OCI-LY7 (cell line): ENCODE measurements at regions of chr2 and their contacts with region 1.

Region 1: DNA sequence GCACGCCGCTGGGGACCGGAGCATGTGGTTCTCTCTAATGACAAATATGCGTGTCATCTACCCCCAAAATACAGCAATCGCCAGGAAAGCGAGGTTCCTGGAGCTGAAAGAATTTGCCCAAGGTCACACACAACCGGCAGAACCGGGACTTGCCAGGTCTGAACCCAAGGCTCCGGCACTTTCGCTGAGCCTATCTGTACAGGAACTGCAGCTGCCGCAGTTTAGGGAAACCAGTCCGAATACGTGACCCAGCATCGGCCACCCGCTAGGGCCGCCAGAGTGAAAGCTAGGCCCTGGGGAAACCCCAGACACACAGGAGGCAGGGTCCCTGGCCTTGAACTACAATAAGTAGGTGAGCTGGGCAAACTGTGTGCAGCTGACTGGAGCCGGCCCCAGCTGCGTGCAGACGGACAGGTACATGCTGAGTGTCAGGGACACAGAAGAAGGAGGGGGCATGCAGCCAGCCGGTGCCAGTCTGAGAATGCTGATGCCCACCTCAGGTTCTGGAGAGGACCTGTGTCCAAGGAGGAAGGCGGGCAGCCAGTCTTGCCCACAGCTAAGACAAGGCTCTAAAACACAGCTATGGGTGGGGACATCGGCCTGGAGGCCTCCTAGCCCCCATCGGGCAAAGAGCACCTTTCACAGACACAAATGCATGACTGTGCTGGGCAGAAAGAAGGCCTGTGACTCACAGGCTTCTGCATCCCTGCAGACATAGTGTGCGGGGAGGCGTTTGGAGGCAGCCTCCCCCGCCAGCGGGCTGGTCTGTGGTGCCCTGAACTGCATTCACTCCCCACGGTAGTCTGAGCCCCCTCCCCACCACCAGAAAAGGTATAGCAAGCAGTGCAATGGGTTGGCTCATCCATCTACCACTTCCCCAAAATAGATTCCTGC is 107.5 kb upstream of the ID2 start:
- DNase-seq: peak; percentile 96
- H3K4me3 ChIP-seq: peak overlapping the region; percentile 75
- H3K27ac ChIP-seq: peak overlapping the region; percentile 98
- H3K4me1 ChIP-seq: peaks cover 95% of the 10 kb centered on the region
- CTCF ChIP-seq: 0 out of 2 replicates have a peak, but pooled peaks have one; percentile 20

Region 2: DNA sequence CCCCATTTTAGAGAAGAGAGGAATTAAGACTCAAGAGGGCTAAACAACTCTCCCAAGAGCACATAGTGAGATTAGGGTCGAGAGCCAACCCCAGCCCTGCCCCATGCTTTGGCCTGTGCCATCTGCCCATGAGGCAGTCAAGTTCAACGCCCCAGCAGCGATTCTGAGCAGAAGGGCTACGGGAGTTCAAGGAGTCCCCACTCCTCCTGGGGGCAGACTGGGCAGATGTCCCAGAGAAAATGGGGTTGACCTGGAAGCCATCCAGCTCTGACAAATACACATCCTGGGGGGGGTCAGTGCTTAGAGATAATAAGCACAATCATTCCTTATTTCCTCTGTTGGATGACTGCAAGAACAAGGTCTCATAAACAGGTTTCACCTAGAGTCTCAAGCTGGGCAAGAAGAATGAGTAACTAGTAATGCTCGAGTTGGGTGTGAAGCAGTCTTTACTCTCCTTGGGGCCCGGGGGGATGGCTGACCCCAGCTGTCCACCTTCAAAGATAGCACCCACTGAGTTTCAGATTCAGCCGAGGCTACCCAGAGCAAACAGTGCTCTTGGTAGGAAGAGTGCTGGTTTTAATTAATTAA is 940.7 kb before region 1 on chr2:
- CTCF ChIA-PET with region 1: no interaction called
- POLR2A ChIA-PET with region 1: no interaction called
- intact Hi-C with region 1: loop called (anchors 10 kb)
- DNase-seq: peak; percentile 25
- H3K4me3 ChIP-seq: no peak overlapping the region
- H3K27ac ChIP-seq: peak overlapping the region; percentile 62
- H3K4me1 ChIP-seq: peaks cover 34% of the 10 kb centered on the region
- CTCF ChIP-seq: no peak

Region 3: GRCh38 chr2:8477552-8478470 is 96.6 kb before region 1 on chr2:
- CTCF ChIA-PET with region 1: interaction called, 3 read pairs
- POLR2A ChIA-PET with region 1: interaction called, 18 read pairs
- intact Hi-C with region 1: loop called (anchors 1 kb)
- DNase-seq: peak; percentile 94
- H3K4me3 ChIP-seq: peak overlapping the region; percentile 50
- H3K27ac ChIP-seq: peak overlapping the region; percentile 97
- H3K4me1 ChIP-seq: peaks cover 99% of the 10 kb centered on the region
- CTCF ChIP-seq: no peak

Region 4: DNA sequence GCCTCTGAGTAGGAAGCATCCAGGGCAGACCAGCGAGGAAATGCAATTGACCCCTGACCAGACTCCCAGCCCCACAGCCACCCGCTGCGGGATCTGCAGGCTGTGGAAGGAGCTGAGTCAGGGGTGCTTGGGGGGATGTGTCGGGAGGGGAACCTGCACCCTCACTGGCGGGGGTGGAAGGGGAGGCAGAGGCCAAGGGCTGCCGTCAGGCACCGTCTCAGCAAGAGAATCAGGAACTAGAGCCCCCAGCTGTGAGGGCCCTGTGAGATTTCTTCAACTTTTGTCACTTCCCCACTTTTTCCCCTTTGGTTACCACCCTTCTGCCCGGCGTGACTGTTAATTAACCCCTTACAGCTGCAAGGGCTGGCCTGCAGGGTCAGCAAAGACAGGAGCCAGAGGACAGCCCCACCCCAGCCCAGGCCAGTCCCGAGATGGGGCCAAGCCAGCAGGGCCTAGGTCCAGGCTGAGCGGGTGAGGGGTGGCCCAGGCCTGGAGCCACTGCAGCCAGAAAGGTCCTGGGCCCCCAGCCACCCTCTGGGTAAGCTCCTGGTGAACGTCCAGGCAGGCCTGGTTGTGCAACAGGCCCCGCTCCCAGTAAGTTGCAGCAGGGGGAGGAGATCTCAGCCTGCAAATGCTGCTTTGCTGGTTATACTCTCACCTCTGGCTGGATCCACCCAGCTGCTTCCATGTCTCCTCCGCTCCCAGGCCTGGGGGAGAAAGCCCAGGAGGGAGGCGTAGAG is 39.5 kb before region 1 on chr2:
- CTCF ChIA-PET with region 1: interaction called, 4 read pairs
- POLR2A ChIA-PET with region 1: interaction called, 107 read pairs
- intact Hi-C with region 1: no loop called
- DNase-seq: peak; percentile 70
- H3K4me3 ChIP-seq: no peak overlapping the region
- H3K27ac ChIP-seq: peak overlapping the region; percentile 58
- H3K4me1 ChIP-seq: peaks cover 69% of the 10 kb centered on the region
- CTCF ChIP-seq: no peak

Region 5: GRCh38 chr2:8551622-8552074 is 22.7 kb before region 1 on chr2:
- CTCF ChIA-PET with region 1: interaction called, 6 read pairs
- POLR2A ChIA-PET with region 1: interaction called, 168 read pairs
- intact Hi-C with region 1: loop called (anchors 1 kb)
- DNase-seq: peak; percentile 78
- H3K4me3 ChIP-seq: peak overlapping the region; percentile 62
- H3K27ac ChIP-seq: peak overlapping the region; percentile 98
- H3K4me1 ChIP-seq: peaks cover 97% of the 10 kb centered on the region
- CTCF ChIP-seq: no peak; the same call in 1 of the 2 replicates

Region 6: DNA sequence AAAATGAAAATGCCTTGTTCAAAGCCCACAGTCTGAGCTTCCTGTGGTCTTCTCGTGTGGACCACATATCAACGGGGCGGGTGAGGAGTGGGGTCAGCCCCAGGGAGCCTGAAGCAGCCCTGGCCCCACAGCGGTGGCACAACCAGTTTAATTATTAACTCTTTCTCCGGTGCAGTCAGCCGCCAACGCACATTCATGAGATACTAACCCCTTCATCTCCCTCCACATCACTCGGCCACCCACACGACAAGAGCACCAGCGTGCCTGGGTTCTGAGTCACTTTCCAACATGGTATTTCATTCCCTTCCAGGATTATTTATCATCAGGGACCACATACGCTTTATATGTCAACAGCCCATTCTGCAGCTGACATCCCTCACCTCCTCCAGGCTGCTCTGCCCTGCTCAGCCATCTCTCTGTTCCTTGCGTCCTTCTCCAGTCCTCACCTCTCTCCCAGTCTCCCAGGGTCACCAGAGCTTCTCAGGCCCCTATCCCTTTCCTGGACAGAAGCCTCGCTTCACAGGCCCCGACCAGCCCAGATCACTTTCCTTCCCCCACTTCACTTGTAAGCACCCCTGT is 59.4 kb after region 1 on chr2:
- CTCF ChIA-PET with region 1: interaction called, 4 read pairs
- POLR2A ChIA-PET with region 1: interaction called, 12 read pairs
- intact Hi-C with region 1: no loop called
- DNase-seq: no peak
- H3K4me3 ChIP-seq: no peak overlapping the region
- H3K27ac ChIP-seq: no peak overlapping the region
- H3K4me1 ChIP-seq: peaks cover 47% of the 10 kb centered on the region
- CTCF ChIP-seq: no peak